ENCODE measurements at regions of chr9 and their contacts with region 1.

Region 1: GRCh38 chr9:115013998-115014397 is 83.6 kb upstream of the TNFSF8 start:
- DNase-seq: peak; percentile 81
- ATAC-seq: peak; percentile 65
- H3K4me3 ChIP-seq: no peak overlapping the region
- H3K4me3 Mint-ChIP-seq: no peak overlapping the region
- H3K27ac ChIP-seq: no peak overlapping the region
- H3K27ac Mint-ChIP-seq: no peak overlapping the region
- H3K4me1 ChIP-seq: no peaks in the 10 kb centered on the region
- H3K4me1 Mint-ChIP-seq: peaks cover 3% of the 10 kb centered on the region
- H3K27me3 ChIP-seq: no peaks in the 10 kb centered on the region
- H3K27me3 Mint-ChIP-seq: peaks cover 24% of the 10 kb centered on the region
- CTCF ChIP-seq: peak; percentile 91

Region 2: GRCh38 chr9:114681594-114682332 is 332.2 kb before region 1 on chr9 and contains the start of gene TEX48:
- CTCF ChIA-PET with region 1: interaction called, 86 read pairs
- POLR2A ChIA-PET with region 1: no interaction called
- intact Hi-C with region 1: loop called (anchors 1 kb)
- DNase-seq: peak; percentile 75
- ATAC-seq: peak; percentile 89
- H3K4me3 ChIP-seq: no peak within 1 kb of the TSS
- H3K4me3 Mint-ChIP-seq: no peak within 1 kb of the TSS
- H3K27ac ChIP-seq: no peak within 1 kb of the TSS
- H3K27ac Mint-ChIP-seq: no peak within 1 kb of the TSS
- H3K4me1 ChIP-seq: peaks cover 0 to 4% of the 10 kb centered on the region in 2 donors
- H3K4me1 Mint-ChIP-seq: peaks cover 2% of the 10 kb centered on the region
- H3K27me3 ChIP-seq: peaks cover 0 to 15% (median 8%) of the 10 kb centered on the region in 4 experiments
- H3K27me3 Mint-ChIP-seq: peaks cover 39% of the 10 kb centered on the region
- CTCF ChIP-seq: peak; percentile 77
- total RNA-seq, gene TEX48: not detected in 2 replicates

Region 3: GRCh38 chr9:114738581-114739316 is 275.2 kb before region 1 on chr9:
- CTCF ChIA-PET with region 1: interaction called, 239 read pairs
- POLR2A ChIA-PET with region 1: interaction called, 5 read pairs
- intact Hi-C with region 1: loop called (anchors 1 kb)
- DNase-seq: peak; percentile 88
- ATAC-seq: peak; percentile 92
- H3K4me3 ChIP-seq: no peak overlapping the region
- H3K4me3 Mint-ChIP-seq: no peak overlapping the region
- H3K27ac ChIP-seq: no peak overlapping the region
- H3K27ac Mint-ChIP-seq: no peak overlapping the region
- H3K4me1 ChIP-seq: peaks cover 7 to 8% of the 10 kb centered on the region in 2 donors
- H3K4me1 Mint-ChIP-seq: peaks cover 13% of the 10 kb centered on the region
- H3K27me3 ChIP-seq: peaks cover 0 to 3% (median 1%) of the 10 kb centered on the region in 4 experiments
- H3K27me3 Mint-ChIP-seq: peaks cover 5% of the 10 kb centered on the region
- CTCF ChIP-seq: peak; percentile 91

Region 4: DNA sequence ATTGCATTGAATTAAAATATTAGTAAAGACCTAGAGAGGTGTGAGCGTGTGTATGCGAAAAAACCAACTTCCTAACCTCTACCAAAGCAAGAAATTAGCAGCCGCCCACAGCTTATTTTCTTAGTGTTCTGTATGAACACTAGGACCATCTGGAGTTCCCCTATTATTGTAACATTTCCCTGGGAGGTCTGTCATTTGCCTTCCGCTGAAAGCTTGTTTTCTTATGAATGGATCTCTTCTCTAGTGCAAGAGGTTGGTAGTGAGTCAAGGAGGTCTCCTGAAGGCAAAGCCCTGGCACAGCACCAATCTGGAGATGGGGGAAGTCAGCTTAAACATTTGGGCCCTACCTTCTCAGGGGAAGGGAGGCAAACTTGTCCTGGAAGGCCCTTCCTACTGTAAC is 94.4 kb before region 1 on chr9:
- CTCF ChIA-PET with region 1: interaction called, 8 read pairs
- POLR2A ChIA-PET with region 1: no interaction called
- intact Hi-C with region 1: loop called (anchors 5 kb)
- DNase-seq: no peak
- ATAC-seq: no peak
- H3K4me3 ChIP-seq: no peak overlapping the region
- H3K4me3 Mint-ChIP-seq: no peak overlapping the region
- H3K27ac ChIP-seq: no peak overlapping the region
- H3K27ac Mint-ChIP-seq: no peak overlapping the region
- H3K4me1 ChIP-seq: peaks cover 9 to 11% of the 10 kb centered on the region in 2 donors
- H3K4me1 Mint-ChIP-seq: peaks cover 14% of the 10 kb centered on the region
- H3K27me3 ChIP-seq: peaks cover 0 to 4% (median 1%) of the 10 kb centered on the region in 4 experiments
- H3K27me3 Mint-ChIP-seq: peaks cover 22% of the 10 kb centered on the region
- CTCF ChIP-seq: no peak

Region 5: DNA sequence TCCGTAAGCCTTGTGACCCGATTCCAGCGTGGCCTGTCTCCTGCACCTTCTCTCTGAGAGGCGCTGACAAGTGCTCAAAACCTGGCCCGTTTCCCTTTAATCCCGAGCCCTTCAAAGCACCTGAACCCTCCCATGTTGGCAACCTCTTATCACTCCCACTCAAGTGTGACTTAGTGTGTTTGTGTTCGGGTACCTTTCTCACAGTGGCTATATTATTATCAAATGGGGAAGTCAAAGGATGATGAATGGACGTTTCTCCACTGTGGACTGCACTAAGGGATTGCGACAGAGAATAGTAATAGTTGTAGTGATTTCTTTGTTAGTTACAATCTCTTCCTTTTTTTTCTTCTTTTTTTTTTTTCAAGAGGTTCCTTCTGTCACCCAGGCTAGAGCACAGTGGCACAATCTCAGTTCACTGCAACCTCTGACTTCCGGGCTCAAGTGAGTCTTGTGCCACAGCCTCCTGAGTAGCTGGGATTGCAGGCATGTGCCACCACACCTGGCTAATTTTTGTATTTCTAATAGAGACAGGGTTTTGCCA is 18.2 kb before region 1 on chr9:
- CTCF ChIA-PET with region 1: no interaction called
- POLR2A ChIA-PET with region 1: no interaction called
- intact Hi-C with region 1: no loop called
- DNase-seq: no peak
- ATAC-seq: no peak
- H3K4me3 ChIP-seq: no peak overlapping the region
- H3K4me3 Mint-ChIP-seq: no peak overlapping the region
- H3K27ac ChIP-seq: no peak overlapping the region
- H3K27ac Mint-ChIP-seq: no peak overlapping the region
- H3K4me1 ChIP-seq: no peaks in the 10 kb centered on the region
- H3K4me1 Mint-ChIP-seq: no peaks in the 10 kb centered on the region
- H3K27me3 ChIP-seq: peaks cover 0 to 4% (median 0%) of the 10 kb centered on the region in 4 experiments
- H3K27me3 Mint-ChIP-seq: peaks cover 12% of the 10 kb centered on the region
- CTCF ChIP-seq: no peak

Measured in B cell (primary cell).